Dendritic cell treated with granulocyte-macrophage colony-stimulating factor and Interleukin-4, amounts not matched to agents 40 ng/mL and 50 ng/mL, for 4 days (primary cell): ENCODE measurements at regions of chr2 and their contacts with region 1.

Region 1: DNA sequence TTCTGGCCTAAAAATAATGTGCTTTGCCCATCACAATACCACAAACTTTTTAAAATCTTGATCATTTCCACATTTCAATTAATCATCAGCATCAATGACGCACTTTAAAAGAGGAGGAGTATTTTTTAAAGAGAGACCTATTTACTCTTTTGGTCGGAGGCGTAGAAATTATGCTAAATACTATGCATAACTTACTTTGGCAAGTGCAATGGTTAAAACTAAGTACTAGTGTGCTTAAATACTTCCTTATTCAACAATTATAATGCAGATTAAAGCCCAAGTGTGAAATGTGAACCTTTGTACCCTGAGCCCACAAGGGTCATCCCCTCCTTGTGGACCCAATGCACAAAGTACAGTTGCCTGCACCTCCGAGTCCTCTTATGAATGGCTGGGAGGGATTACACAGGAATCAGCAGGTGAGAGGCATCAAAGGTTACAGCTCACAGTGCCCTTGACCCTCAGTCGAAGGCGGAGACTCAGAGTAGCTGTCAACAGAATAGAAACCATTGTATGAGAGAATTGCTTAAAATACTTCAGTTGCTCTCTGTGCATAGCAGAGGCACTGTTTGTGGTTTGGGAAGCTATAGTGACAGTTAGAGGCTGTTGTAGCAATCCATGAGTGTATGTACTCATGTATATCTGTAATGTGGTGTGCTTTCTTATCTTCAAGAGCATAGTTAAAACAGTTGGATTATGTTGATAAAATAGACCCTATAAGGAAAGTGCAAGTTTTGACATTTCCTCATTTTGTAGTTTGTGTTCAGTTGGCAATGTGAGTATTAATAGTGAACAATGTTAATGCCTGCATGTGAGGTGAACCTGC is 151.7 kb upstream of the ITGA4 start:
- H3K4me3 Mint-ChIP-seq: no peak overlapping the region
- H3K27ac Mint-ChIP-seq: peak overlapping the region; percentile 45
- H3K4me1 Mint-ChIP-seq: peaks cover 35% of the 10 kb centered on the region
- H3K27me3 Mint-ChIP-seq: no peaks in the 10 kb centered on the region

Region 2: GRCh38 chr2:181252262-181253148 is 53.0 kb before region 1 on chr2:
- intact Hi-C with region 1: loop called (anchors 5 kb)
- H3K4me3 Mint-ChIP-seq: no peak overlapping the region
- H3K27ac Mint-ChIP-seq: peak overlapping the region; percentile 50
- H3K4me1 Mint-ChIP-seq: peaks cover 42% of the 10 kb centered on the region
- H3K27me3 Mint-ChIP-seq: no peaks in the 10 kb centered on the region

Region 3: DNA sequence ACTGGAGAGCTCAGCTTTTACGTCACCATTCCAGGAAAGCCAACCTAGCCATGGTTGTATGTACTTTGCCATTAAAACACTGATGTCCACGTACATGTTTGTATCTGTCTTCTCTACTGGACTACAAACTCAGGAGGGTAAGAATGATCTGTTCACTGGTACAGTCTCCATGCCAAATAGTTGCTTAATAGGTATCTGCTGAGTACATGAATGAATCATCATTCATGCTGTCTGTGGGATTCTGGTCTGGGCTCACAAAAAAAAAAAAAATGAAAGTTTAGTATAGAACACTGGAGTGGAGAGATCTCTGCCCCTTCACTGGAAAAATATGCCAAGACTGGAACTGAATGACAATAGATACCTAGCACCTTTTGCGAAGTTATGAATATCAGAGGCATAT is 49.1 kb after region 1 on chr2:
- intact Hi-C with region 1: no loop called
- H3K4me3 Mint-ChIP-seq: no peak overlapping the region
- H3K27ac Mint-ChIP-seq: no peak overlapping the region
- H3K4me1 Mint-ChIP-seq: peaks cover 31% of the 10 kb centered on the region
- H3K27me3 Mint-ChIP-seq: no peaks in the 10 kb centered on the region